Heart right ventricle (tissue), 16 donors: ENCODE measurements at regions of chr18 and their contacts with region 1.

Region 1: GRCh38 chr18:70082430-70082829 is 123.1 kb downstream of the RTTN start:
- DNase-seq: no peak
- ATAC-seq: no peak
- H3K4me3 ChIP-seq: no peak overlapping the region
- H3K27ac ChIP-seq: no peak overlapping the region
- H3K4me1 ChIP-seq: no peaks in the 10 kb centered on the region
- H3K27me3 ChIP-seq: no peaks in the 10 kb centered on the region
- CTCF ChIP-seq: no peak

Region 2: DNA sequence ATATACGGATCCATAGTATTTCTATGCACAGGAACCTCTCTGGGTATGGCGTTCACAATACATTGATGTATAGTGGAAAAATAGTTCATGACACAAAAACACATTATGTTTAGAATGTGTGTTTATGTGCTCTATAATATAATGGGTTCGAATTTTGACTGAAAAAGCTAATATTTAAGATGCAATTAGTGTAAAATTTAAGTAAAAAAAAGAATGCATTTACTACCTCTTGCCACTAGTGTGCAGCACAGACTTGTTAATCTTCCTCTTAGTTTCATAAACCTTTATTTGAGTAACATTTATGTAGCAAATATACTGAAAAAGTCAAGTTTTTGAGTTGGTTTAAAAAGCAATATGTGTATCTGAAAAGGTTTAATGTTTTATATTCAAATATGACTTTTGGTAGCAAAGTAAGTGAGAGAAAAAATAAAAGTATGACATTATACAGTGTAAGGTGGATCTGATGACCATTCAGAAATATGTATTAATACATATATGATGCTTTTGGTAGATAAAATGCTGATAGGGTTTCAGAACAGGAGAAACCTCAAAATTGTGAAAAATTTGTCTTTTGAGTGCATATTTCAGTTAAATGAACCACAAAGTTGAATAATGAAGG is 1235.1 kb before region 1 on chr18:
- intact Hi-C with region 1: loop called in 9 of 10 experiments (anchors 2 to 10 kb)
- DNase-seq: no peak
- ATAC-seq: peak in 1 of 8 donors; percentile 29
- H3K4me3 ChIP-seq: no peak overlapping the region
- H3K27ac ChIP-seq: no peak overlapping the region
- H3K4me1 ChIP-seq: no peaks in the 10 kb centered on the region
- H3K27me3 ChIP-seq: no peaks in the 10 kb centered on the region
- CTCF ChIP-seq: peak in 8 of 9 donors; percentile 35 to 73 (median 67)

Region 3: DNA sequence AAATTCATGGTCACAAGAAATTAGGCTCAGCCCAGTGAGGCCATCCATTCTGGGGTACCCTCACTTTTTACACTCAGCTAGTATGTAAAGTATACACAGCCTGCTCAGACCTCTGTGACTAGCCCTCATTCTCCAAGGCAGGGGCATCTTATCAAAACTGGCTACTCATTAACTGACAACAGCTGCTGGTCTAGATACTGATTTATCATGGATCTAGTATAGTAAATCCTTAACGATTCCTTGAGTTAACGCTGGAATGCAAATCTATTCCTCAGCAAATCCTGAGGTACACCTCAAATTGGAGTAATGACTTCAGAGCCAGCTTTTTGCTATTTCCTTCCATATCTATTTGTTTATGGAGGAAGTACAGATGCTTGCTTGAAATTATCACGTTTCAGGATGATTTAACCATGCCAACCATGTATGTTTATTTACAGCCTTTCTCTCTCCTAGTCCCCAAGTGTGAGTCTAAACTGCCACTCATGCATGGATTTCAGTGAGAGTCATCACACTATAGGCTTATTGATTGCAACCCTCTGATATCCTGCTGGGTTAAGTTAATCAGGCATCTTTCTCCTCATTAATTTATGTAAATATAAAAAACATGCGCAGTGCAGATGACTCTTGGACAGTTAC is 751.9 kb before region 1 on chr18:
- intact Hi-C with region 1: no loop called
- DNase-seq: no peak
- ATAC-seq: no peak
- H3K4me3 ChIP-seq: no peak overlapping the region
- H3K27ac ChIP-seq: no peak overlapping the region
- H3K4me1 ChIP-seq: no peaks in the 10 kb centered on the region
- H3K27me3 ChIP-seq: no peaks in the 10 kb centered on the region
- CTCF ChIP-seq: no peak

Region 4: DNA sequence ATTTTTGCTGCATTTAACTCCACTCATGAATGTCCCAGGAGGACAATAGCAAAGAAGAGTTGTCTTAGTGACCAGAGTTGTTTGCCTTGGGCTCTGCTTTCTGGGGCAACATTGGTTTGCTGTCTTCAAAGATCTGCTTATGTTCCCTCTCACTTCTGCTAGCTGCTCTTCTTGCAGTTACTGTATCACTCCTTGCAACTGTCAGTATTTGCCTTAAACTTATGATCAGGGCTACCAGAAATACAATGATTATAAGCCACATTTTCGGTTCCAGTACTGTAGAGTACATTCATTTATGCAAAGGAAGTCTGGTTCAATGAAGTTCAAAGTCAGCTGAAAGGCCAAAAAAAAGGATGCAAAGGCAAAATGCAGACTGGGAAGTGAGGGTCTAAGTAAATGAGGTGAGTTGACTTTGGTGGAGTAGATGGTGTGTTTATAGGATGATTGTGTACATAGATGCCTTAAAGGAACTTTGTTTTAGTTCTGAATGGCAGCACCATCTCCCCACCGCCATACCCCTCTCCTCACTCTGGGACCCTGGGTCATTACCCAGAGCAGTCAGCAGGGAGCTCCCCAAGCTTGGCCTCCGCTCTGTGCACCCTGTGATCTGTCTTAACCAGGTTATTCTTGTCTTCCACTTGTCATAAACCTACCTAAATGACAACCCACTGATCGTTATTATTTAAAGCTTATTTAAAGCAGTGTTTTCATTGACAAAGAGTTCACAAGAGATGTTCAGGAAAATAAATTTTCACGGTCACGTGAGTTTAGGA is 445.7 kb before region 1 on chr18:
- intact Hi-C with region 1: loop called in 5 of 10 experiments (anchors 5 to 10 kb)
- DNase-seq: peak in 1 of 2 donors; percentile 16
- ATAC-seq: peak in 6 of 8 donors; percentile 29 to 75 (median 68)
- H3K4me3 ChIP-seq: no peak overlapping the region
- H3K27ac ChIP-seq: no peak overlapping the region
- H3K4me1 ChIP-seq: no peaks in the 10 kb centered on the region
- H3K27me3 ChIP-seq: no peaks in the 10 kb centered on the region
- CTCF ChIP-seq: peak in 8 of 9 donors; percentile 10 to 57 (median 40)

Region 5: GRCh38 chr18:70158992-70159717 is 76.7 kb after region 1 on chr18:
- intact Hi-C with region 1: no loop called
- DNase-seq: no peak
- ATAC-seq: no peak
- H3K4me3 ChIP-seq: no peak overlapping the region
- H3K27ac ChIP-seq: no peak overlapping the region
- H3K4me1 ChIP-seq: no peaks in the 10 kb centered on the region
- H3K27me3 ChIP-seq: no peaks in the 10 kb centered on the region
- CTCF ChIP-seq: no peak

Region 6: DNA sequence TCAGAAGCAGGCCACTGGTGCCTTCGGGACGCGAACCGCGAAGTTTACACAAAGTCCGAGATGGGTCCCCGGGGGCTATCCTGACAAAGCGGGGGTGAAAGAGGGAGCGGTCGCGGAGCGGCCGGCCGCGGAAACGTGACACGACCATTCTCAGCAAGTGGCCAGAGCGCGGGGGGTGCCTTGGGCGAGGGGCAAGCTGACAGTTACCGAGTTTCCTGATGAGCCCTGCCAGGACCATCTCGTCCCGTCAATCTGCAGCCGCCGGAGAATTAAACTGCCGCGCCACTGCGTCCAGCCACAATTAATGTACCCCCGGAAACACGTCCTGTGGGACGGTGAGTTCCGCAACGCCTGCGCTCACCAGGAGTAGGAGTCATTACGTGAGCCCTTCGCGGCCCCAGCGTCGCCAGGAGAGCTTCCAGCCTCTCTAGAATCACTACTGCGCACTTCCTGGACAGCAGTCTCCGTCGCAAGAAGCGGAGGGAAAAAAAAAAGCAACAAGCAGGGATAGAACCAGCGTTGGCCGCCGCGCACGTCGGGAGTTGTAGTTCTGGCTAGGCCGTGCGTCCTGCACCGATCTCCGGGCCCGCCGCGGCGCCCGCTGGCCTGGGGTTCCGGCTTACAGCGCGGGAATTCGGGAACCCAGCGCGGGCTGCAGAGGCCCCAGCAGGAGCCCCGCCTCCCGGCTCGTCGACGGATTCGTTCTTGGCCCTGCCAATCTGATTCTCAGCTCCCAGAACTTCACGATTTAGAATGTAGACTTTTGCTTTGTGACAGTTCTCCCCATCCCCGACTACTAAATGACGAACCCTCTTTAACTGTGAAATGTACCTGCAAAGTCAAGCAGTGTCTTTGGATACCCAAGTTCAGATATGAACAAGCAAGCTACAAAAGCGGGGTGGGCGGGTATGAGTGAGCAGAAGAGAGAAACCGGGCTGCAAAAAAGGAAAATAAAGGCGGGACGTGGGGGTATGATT is 123.3 kb after region 1 on chr18 and contains the start of gene RTTN:
- intact Hi-C with region 1: no loop called
- DNase-seq: peak; percentile 94 to 95
- ATAC-seq: peak; percentile 100
- H3K4me3 ChIP-seq: peak within 1 kb of the TSS; percentile 32 to 89 (median 74)
- H3K27ac ChIP-seq: peak within 1 kb of the TSS; percentile 91 to 99 (median 97)
- H3K4me1 ChIP-seq: peaks cover 0 to 22% (median 16%) of the 10 kb centered on the region in 9 donors
- H3K27me3 ChIP-seq: peaks cover 0 to 2% (median 0%) of the 10 kb centered on the region in 7 donors
- CTCF ChIP-seq: no peak
- total RNA-seq, gene RTTN: 6.5 to 15.7 (median 10.2) TPM